ENCODE measurements at regions of chr1 and their contacts with region 1.

Region 1: DNA sequence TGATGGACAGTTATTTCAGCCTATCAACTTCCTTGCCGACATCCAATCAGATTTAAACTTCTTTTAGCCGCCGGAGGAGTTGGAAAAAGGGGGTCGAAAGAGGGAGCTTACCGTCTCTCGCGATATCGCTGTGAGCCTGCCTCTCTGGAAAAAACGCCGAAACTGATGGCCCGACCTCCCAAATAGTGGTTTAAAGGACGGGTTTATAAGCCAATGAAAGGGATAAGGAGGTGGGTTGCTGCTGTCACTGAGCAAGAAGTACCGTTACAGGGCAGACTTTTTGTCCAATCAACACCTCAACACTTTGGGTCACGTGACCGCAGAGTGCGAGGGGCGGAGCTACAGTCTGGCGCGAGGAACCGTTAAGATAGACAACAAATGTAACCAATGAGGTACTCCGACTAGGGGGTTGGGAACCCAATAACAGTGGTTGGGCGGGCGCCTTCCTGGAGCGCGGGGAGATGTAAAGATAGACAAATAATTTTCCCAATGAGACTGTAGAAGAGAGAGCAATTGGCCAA is at the start of gene RBM15:
- DNase-seq: peak; percentile 87 to 100 (median 98)
- ATAC-seq: peak; percentile 74 to 75
- H3K4me3 Mint-ChIP-seq: no peak within 1 kb of the TSS
- H3K27ac Mint-ChIP-seq: peak within 1 kb of the TSS in 1 of 10 donors; percentile 97
- H3K4me1 Mint-ChIP-seq: peaks cover 24 to 61% (median 58%) of the 10 kb centered on the region in 4 donors
- H3K27me3 Mint-ChIP-seq: no peaks in the 10 kb centered on the region
- polyA plus RNA-seq, gene RBM15: 6.6 to 11.0 (median 8.2) TPM

Region 2: GRCh38 chr1:110034451-110035235 is 304.3 kb before region 1 on chr1 and contains the start of gene STRIP1:
- POLR2A ChIA-PET with region 1: interaction called, 31 read pairs
- DNase-seq: peak; percentile 83 to 97 (median 93)
- ATAC-seq: peak; percentile 94 to 96
- H3K4me3 Mint-ChIP-seq: peak within 1 kb of the TSS; percentile 77 to 98 (median 96)
- H3K27ac Mint-ChIP-seq: peak within 1 kb of the TSS; percentile 88 to 98 (median 97)
- H3K4me1 Mint-ChIP-seq: peaks cover 11 to 61% (median 41%) of the 10 kb centered on the region in 4 donors
- H3K27me3 Mint-ChIP-seq: no peaks in the 10 kb centered on the region
- polyA plus RNA-seq, gene STRIP1: 17.8 to 26.8 (median 18.7) TPM

Region 3: GRCh38 chr1:110203021-110203661 is 135.8 kb before region 1 on chr1:
- POLR2A ChIA-PET with region 1: interaction called, 136 read pairs
- DNase-seq: peak; percentile 35 to 85 (median 74)
- ATAC-seq: peak; percentile 63 to 69
- H3K4me3 Mint-ChIP-seq: peak overlapping the region in 1 of 10 donors; percentile 44
- H3K27ac Mint-ChIP-seq: peak overlapping the region; percentile 23 to 92 (median 84)
- H3K4me1 Mint-ChIP-seq: peaks cover 14 to 27% (median 22%) of the 10 kb centered on the region in 4 donors
- H3K27me3 Mint-ChIP-seq: no peaks in the 10 kb centered on the region

Region 4: GRCh38 chr1:110209715-110210603 is 129.0 kb before region 1 on chr1 and contains the start of gene KCNC4:
- POLR2A ChIA-PET with region 1: interaction called, 136 read pairs
- DNase-seq: peak; percentile 78 to 96 (median 90)
- ATAC-seq: peak; percentile 82 to 88
- H3K4me3 Mint-ChIP-seq: peak within 1 kb of the TSS; percentile 84 to 94 (median 90)
- H3K27ac Mint-ChIP-seq: peak within 1 kb of the TSS; percentile 88 to 97 (median 96)
- H3K4me1 Mint-ChIP-seq: peaks cover 41 to 66% (median 54%) of the 10 kb centered on the region in 4 donors
- H3K27me3 Mint-ChIP-seq: no peaks in the 10 kb centered on the region
- polyA plus RNA-seq, gene KCNC4: 0.90 to 3.1 (median 1.9) TPM

Region 5: GRCh38 chr1:110370827-110371226 is 31.9 kb after region 1 on chr1:
- POLR2A ChIA-PET with region 1: no interaction called
- DNase-seq: no peak
- ATAC-seq: no peak
- H3K4me3 Mint-ChIP-seq: no peak overlapping the region
- H3K27ac Mint-ChIP-seq: peak overlapping the region in 1 of 10 donors; percentile 16
- H3K4me1 Mint-ChIP-seq: peaks cover 0 to 9% (median under 1%) of the 10 kb centered on the region in 4 donors
- H3K27me3 Mint-ChIP-seq: no peaks in the 10 kb centered on the region

Region 6: DNA sequence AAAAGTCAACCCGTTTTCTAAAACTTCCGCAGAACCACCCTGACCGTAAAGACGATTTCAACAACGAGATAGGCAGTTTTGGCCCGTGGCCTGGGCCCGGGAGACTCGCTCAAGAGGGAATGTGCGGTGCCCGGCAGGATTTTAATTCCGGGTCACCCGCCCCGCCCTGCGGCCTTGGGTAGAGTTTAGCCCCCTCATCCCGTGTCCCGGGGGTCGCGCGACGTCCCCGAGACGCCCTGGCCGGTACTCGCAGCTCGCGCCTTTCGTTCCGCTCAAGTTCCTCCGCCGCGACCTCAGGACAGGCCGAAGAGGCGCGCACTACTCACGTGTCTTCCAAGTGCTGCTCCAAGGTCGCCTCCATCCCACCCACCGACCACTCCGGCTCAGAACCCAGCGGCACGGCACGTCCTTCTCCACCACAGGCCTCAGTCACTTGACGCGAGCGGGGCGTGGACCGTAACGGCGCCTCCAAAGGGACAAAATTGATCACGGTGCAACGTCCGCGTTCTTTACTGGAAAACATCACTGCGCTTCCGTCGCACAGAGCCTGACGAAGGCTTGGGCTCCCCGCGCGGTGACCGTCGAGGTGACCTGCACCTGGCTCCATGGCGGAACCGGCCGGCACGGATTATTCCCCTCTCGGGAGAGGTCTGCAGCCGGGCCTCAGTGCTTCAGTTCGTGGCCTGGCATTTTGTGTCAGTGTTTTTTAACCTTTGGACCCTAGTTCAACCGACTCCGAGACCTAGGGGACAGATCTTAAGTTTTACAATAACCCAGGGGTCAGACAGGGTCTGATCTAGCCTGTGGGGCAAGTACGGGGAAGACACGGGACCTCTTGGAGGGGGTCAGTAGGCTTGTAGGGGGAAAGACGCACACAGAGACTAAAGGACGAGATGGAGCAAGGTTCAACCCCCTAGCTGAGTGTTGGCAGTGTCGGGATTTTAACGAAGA is 68.6 kb after region 1 on chr1 and contains the start of gene LAMTOR5:
- POLR2A ChIA-PET with region 1: interaction called, 46 read pairs
- DNase-seq: peak; percentile 78 to 96 (median 88)
- ATAC-seq: peak; percentile 93 to 95
- H3K4me3 Mint-ChIP-seq: peak within 1 kb of the TSS; percentile 95 to 100 (median 99)
- H3K27ac Mint-ChIP-seq: peak within 1 kb of the TSS; percentile 98 to 100 (median 100)
- H3K4me1 Mint-ChIP-seq: peaks cover 10 to 33% (median 24%) of the 10 kb centered on the region in 4 donors
- H3K27me3 Mint-ChIP-seq: no peaks in the 10 kb centered on the region
- polyA plus RNA-seq, gene LAMTOR5: 192 to 262 (median 247) TPM

Region 7: GRCh38 chr1:110420874-110421793 is 82.2 kb after region 1 on chr1:
- POLR2A ChIA-PET with region 1: no interaction called
- DNase-seq: no peak
- ATAC-seq: no peak
- H3K4me3 Mint-ChIP-seq: no peak overlapping the region
- H3K27ac Mint-ChIP-seq: peak overlapping the region in 1 of 10 donors; percentile 12
- H3K4me1 Mint-ChIP-seq: no peaks in the 10 kb centered on the region
- H3K27me3 Mint-ChIP-seq: peaks cover 0 to 5% (median 3%) of the 10 kb centered on the region in 5 donors